GM23248 (cell line): ENCODE measurements at regions of chr15 and their contacts with region 1.

Region 1: DNA sequence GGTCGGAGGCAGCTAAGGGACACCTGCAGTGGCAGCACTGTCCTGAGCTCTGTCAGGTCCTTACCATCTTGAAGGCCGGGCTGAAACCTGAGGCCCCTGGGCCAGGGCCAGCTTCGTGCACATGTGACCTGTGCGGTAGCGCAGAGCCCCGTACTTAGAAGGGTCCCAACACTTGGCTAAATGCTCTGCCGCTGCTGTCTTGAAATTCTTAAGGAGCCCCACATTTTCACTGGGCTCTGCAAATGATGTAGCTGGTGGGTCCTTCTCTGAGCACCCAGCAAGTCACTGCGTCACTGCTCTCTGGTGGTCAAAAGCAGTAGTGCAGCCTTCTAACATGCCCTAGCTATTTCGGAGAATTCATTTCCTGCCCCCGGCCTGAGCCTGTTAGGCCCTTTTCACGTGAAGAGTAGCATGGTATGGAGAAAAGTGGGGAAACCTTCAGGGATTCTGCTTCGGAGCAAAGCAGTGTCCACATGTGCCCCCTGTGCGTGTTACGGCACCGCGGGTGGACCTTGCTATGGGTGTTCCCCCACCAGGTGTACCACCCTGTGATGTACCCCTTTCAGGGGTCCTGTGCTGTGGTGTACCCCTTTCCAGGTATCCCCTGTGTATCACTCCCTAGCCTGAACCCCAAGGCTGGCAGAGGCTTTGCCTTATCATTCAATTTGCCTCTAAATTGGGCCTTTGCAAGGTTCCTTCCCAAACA is 79.7 kb downstream of the TMEM266 start:
- DNase-seq: peak; percentile 79
- H3K4me3 ChIP-seq: no peak overlapping the region
- H3K27ac ChIP-seq: no peak overlapping the region
- H3K4me1 ChIP-seq: no peaks in the 10 kb centered on the region
- H3K27me3 ChIP-seq: peaks cover 29% of the 10 kb centered on the region

Region 2: GRCh38 chr15:75801859-75802593 is 337.5 kb before region 1 on chr15:
- in situ Hi-C with region 1: loop called (anchors 25 kb)
- DNase-seq: peak; percentile 86
- H3K4me3 ChIP-seq: peak overlapping the region; percentile 66
- H3K27ac ChIP-seq: no peak overlapping the region
- H3K4me1 ChIP-seq: 0 out of 2 replicates have a peak, but pooled peaks cover 3% of the 10 kb centered on the region
- H3K27me3 ChIP-seq: peaks cover 34% of the 10 kb centered on the region